ENCODE measurements at regions of chr4 and their contacts with region 1.

Region 1: DNA sequence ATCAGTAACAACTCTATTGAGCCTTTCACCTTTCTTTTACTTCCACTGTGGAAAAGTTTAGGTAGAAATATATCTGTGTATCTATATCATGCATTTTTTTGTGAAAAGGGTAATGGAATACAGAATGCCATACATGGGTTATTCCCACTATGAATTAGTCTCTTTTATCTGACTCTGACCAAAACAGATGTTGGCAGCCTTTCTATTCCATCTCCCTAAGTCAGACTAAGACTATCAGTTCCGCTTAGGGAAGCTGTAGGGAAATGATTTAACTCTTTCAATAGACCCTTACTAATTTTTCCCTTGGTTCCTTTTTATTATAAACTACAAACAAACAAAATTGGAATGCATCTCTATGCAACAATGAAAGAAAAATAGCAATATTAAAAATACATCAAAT is 92.3 kb upstream of the LEF1 start:
- DNase-seq: no peak
- ATAC-seq: no peak
- H3K4me3 ChIP-seq: no peak overlapping the region
- H3K4me3 Mint-ChIP-seq: no peak overlapping the region
- H3K27ac ChIP-seq: no peak overlapping the region
- H3K27ac Mint-ChIP-seq: no peak overlapping the region
- H3K4me1 ChIP-seq: no peaks in the 10 kb centered on the region
- H3K4me1 Mint-ChIP-seq: peaks cover 2 to 17% (median 10%) of the 10 kb centered on the region in 3 donors
- H3K27me3 ChIP-seq: no peaks in the 10 kb centered on the region
- H3K27me3 Mint-ChIP-seq: no peaks in the 10 kb centered on the region

Region 2: DNA sequence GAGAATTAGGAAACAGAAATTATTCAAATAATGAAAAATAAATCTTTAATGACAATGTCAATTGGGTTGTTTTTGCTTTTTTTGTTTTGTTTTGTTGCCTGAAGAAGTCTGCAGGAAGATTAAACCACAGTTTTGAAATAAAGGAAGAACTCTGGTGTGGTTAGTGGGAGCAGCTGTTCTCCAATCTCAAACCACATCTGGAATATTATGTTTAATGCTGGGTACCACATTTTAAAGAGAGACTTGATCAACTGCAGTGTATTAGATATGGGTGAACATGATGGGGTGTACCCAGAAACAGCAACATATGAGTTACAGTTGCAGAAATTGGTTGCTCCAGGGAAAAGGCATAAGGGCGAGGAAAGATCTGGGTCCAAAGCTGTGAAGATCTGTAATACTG is 188.1 kb after region 1 on chr4:
- CTCF ChIA-PET with region 1: interaction called in 1 of 2 experiments, 10 read pairs
- POLR2A ChIA-PET with region 1: interaction called in 1 of 2 experiments, 6 read pairs
- DNase-seq: no peak
- ATAC-seq: no peak
- H3K4me3 ChIP-seq: no peak overlapping the region
- H3K4me3 Mint-ChIP-seq: no peak overlapping the region
- H3K27ac ChIP-seq: no peak overlapping the region
- H3K27ac Mint-ChIP-seq: peak overlapping the region; percentile 1 to 20
- H3K4me1 ChIP-seq: peaks cover 0 to 6% of the 10 kb centered on the region in 2 experiments
- H3K4me1 Mint-ChIP-seq: peaks cover 8 to 20% (median 11%) of the 10 kb centered on the region in 3 donors
- H3K27me3 ChIP-seq: no peaks in the 10 kb centered on the region
- H3K27me3 Mint-ChIP-seq: no peaks in the 10 kb centered on the region

Measured in T-cell (primary cell).